ENCODE measurements at regions of chr15 and their contacts with region 1.

Region 1: GRCh38 chr15:77496710-77497103 is 76.0 kb downstream of the HMG20A start:
- DNase-seq: peak; percentile 83 to 95 (median 91)
- H3K4me3 ChIP-seq: peak overlapping the region in 1 of 4 donors; percentile 6
- H3K27ac ChIP-seq: peak overlapping the region in 4 of 5 donors; percentile 9 to 82 (median 47)
- H3K4me1 ChIP-seq: peaks cover 12 to 51% of the 10 kb centered on the region in 2 donors
- H3K27me3 ChIP-seq: no peaks in the 10 kb centered on the region
- CTCF ChIP-seq: peak; percentile 72 to 95 (median 94)
- POLR2A ChIP-seq: no peak

Region 2: GRCh38 chr15:77034695-77035489 is 461.8 kb before region 1 on chr15:
- intact Hi-C with region 1: loop called in 1 of 2 experiments (anchors 10 kb)
- DNase-seq: peak in 6 of 7 donors; percentile 26 to 58 (median 38)
- H3K4me3 ChIP-seq: no peak overlapping the region
- H3K27ac ChIP-seq: no peak overlapping the region
- H3K4me1 ChIP-seq: no peaks in the 10 kb centered on the region
- H3K27me3 ChIP-seq: no peaks in the 10 kb centered on the region
- CTCF ChIP-seq: peak; percentile 25 to 60 (median 46)
- POLR2A ChIP-seq: no peak

Region 3: GRCh38 chr15:77118882-77119321 is 377.8 kb before region 1 on chr15:
- intact Hi-C with region 1: loop called (anchors 5 to 10 kb)
- DNase-seq: peak; percentile 33 to 82 (median 43)
- H3K4me3 ChIP-seq: no peak overlapping the region
- H3K27ac ChIP-seq: no peak overlapping the region
- H3K4me1 ChIP-seq: peaks cover 0 to 17% of the 10 kb centered on the region in 2 donors
- H3K27me3 ChIP-seq: no peaks in the 10 kb centered on the region
- CTCF ChIP-seq: peak; percentile 45 to 79 (median 76)
- POLR2A ChIP-seq: no peak

Region 4: GRCh38 chr15:77186594-77187011 is 310.1 kb before region 1 on chr15:
- intact Hi-C with region 1: loop called in 1 of 2 experiments (anchors 10 kb)
- DNase-seq: peak in 1 of 7 donors; percentile 5
- H3K4me3 ChIP-seq: no peak overlapping the region
- H3K27ac ChIP-seq: peak overlapping the region in 2 of 5 donors; percentile 63 to 84
- H3K4me1 ChIP-seq: peaks cover 0 to 19% of the 10 kb centered on the region in 2 donors
- H3K27me3 ChIP-seq: no peaks in the 10 kb centered on the region
- CTCF ChIP-seq: peak; percentile 20 to 83 (median 58)
- POLR2A ChIP-seq: no peak

Region 5: DNA sequence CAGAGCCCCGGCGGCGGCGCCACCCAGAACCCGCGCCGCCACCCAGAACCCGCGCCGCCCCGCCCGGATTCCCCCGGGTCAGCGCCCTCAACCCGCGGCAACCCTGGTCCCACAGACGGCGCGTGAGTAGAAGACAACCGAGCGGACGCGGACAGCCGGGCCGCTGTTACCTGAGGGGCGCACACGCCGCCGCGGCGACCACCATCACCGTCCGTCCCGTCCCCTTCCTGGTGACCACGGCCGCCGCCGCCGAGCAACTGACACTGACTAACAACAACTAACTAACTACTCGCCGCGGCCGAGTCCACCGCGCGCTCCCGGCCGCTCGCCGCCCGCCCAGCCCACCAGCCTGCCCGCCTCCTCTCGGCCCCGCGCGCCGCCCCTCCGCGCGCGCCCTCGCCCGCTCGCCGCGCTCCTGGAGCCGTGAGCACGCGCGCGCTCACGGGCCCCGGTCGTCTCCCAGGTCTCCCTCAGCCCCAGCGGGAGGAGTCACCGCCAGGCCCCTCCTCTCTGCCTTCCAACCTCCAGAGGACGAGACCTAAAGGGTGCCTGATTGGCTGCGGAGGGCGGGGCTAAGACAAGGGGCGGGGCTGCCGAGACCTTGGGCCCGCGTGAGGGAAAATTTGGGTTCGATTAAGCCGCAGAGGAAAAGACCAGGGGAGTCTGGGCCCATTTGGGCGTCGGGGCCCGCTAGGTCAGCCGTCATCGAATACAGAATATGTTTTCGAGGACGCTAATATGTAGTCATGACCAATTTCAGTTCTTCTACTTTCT is 76.7 kb before region 1 on chr15 and contains the start of gene PEAK1:
- intact Hi-C with region 1: loop called in 1 of 2 experiments (anchors 5 kb)
- DNase-seq: peak; percentile 99 to 100 (median 100)
- H3K4me3 ChIP-seq: peak within 1 kb of the TSS; percentile 7 to 95 (median 82)
- H3K27ac ChIP-seq: peak within 1 kb of the TSS; percentile 86 to 97 (median 93)
- H3K4me1 ChIP-seq: peaks cover 22 to 71% of the 10 kb centered on the region in 2 donors
- H3K27me3 ChIP-seq: no peaks in the 10 kb centered on the region
- CTCF ChIP-seq: peak in 1 of 6 experiments; percentile 9
- POLR2A ChIP-seq: peak; percentile 83 to 88
- total RNA-seq, gene PEAK1: 21.6 to 68.4 (median 29.7) TPM

Measured in adrenal gland (tissue), 19 donors.